ENCODE measurements at regions of chr2 and their contacts with region 1.

Region 1: GRCh38 chr2:233189025-233189424 is 62.4 kb upstream of the ATG16L1 start:
- DNase-seq: no peak
- H3K4me3 ChIP-seq: no peak overlapping the region
- H3K4me3 Mint-ChIP-seq: no peak overlapping the region
- H3K27ac Mint-ChIP-seq: no peak overlapping the region
- H3K4me1 ChIP-seq: no peaks in the 10 kb centered on the region
- H3K4me1 Mint-ChIP-seq: no peaks in the 10 kb centered on the region
- H3K27me3 ChIP-seq: no peaks in the 10 kb centered on the region
- H3K27me3 Mint-ChIP-seq: peaks cover 4% of the 10 kb centered on the region
- CTCF ChIP-seq: no peak

Region 2: GRCh38 chr2:233223059-233223894 is 34.3 kb after region 1 on chr2:
- CTCF ChIA-PET with region 1: no interaction called
- POLR2A ChIA-PET with region 1: no interaction called
- intact Hi-C with region 1: no loop called
- DNase-seq: no peak
- H3K4me3 ChIP-seq: no peak overlapping the region
- H3K4me3 Mint-ChIP-seq: no peak overlapping the region
- H3K27ac Mint-ChIP-seq: no peak overlapping the region
- H3K4me1 ChIP-seq: no peaks in the 10 kb centered on the region
- H3K4me1 Mint-ChIP-seq: no peaks in the 10 kb centered on the region
- H3K27me3 ChIP-seq: no peaks in the 10 kb centered on the region
- H3K27me3 Mint-ChIP-seq: peaks cover 5% of the 10 kb centered on the region
- CTCF ChIP-seq: no peak

Region 3: GRCh38 chr2:233323851-233324250 is 134.8 kb after region 1 on chr2:
- CTCF ChIA-PET with region 1: no interaction called
- POLR2A ChIA-PET with region 1: no interaction called
- intact Hi-C with region 1: no loop called
- DNase-seq: peak in 1 of 2 experiments; percentile 9
- H3K4me3 ChIP-seq: no peak overlapping the region
- H3K4me3 Mint-ChIP-seq: no peak overlapping the region
- H3K27ac Mint-ChIP-seq: no peak overlapping the region
- H3K4me1 ChIP-seq: no peaks in the 10 kb centered on the region
- H3K4me1 Mint-ChIP-seq: peaks cover 8% of the 10 kb centered on the region
- H3K27me3 ChIP-seq: no peaks in the 10 kb centered on the region
- H3K27me3 Mint-ChIP-seq: no peaks in the 10 kb centered on the region
- CTCF ChIP-seq: no peak

Region 4: DNA sequence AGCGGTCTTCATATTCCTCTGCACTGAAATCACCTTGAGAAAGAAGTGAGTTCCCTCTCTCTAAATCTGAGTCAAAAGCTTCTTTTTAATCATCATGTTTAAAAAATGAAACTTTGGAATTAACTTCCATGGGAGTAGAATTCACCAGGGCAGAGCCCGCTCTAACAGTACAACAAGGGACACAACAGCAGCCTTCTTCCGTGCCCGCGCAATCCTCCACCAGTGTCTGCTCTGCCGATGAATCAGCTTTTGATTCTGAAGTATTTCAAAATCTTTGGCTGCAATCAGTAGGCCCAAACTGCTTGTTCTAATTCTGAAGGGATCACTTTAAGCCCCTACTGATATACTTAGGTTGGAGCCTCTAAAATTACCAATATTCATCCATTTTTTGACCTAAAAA is 300.6 kb after region 1 on chr2:
- CTCF ChIA-PET with region 1: no interaction called
- POLR2A ChIA-PET with region 1: interaction called, 10 read pairs
- intact Hi-C with region 1: no loop called
- DNase-seq: no peak
- H3K4me3 ChIP-seq: no peak overlapping the region
- H3K4me3 Mint-ChIP-seq: no peak overlapping the region
- H3K27ac Mint-ChIP-seq: no peak overlapping the region
- H3K4me1 ChIP-seq: peaks cover 38% of the 10 kb centered on the region
- H3K4me1 Mint-ChIP-seq: peaks cover 18% of the 10 kb centered on the region
- H3K27me3 ChIP-seq: no peaks in the 10 kb centered on the region
- H3K27me3 Mint-ChIP-seq: no peaks in the 10 kb centered on the region
- CTCF ChIP-seq: no peak

Measured in Caco-2 (cell line).